GM10248 (cell line): ENCODE measurements at regions of chr3 and their contacts with region 1.

Region 1: GRCh38 chr3:27467545-27467944 is 16.6 kb downstream of the SLC4A7 start:
- DNase-seq: peak; percentile 63
- CTCF ChIP-seq: peak; percentile 50

Region 2: GRCh38 chr3:27312044-27312668 is 155.4 kb before region 1 on chr3:
- CTCF ChIA-PET with region 1: interaction called, 18 read pairs
- POLR2A ChIA-PET with region 1: no interaction called
- DNase-seq: peak; percentile 50
- CTCF ChIP-seq: peak; percentile 66

Region 3: DNA sequence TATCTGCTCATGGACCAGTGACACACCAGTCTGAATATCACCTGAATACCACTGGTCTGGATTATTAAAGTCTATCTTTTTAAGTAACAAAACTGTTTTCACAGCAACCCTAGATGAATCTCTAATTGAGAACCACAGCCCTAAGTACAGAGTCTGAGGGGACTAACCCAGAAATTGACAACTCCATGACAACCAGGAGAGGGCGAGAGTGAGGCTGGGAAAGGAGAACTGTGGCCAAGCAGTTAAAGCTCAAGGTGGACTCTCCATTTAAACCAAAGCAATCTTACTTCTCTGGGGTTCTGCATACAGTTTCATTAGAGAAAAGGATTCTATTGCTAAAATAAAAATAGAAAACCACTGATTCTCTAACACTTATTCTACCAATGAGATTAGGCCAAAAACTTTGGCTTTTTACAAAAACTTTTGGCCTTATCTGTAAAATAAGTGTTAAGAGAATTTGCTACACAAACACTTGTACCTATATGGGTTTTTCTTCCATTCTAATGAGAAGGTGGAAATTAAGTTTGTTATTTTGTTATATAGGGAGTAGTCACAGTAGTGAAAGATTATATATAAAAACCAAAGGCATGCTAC is 109.8 kb before region 1 on chr3:
- CTCF ChIA-PET with region 1: interaction called, 24 read pairs
- POLR2A ChIA-PET with region 1: no interaction called
- DNase-seq: peak; percentile 48
- CTCF ChIP-seq: peak; percentile 80

Region 4: GRCh38 chr3:27387625-27388024 is 79.9 kb before region 1 on chr3:
- CTCF ChIA-PET with region 1: no interaction called
- POLR2A ChIA-PET with region 1: no interaction called
- DNase-seq: no peak
- CTCF ChIP-seq: no peak

Region 5: GRCh38 chr3:27456554-27456953 is 11.0 kb before region 1 on chr3:
- CTCF ChIA-PET with region 1: interaction called, 30 read pairs
- POLR2A ChIA-PET with region 1: no interaction called
- DNase-seq: no peak
- CTCF ChIP-seq: no peak

Region 6: GRCh38 chr3:27479806-27480543 is 12.4 kb after region 1 on chr3:
- CTCF ChIA-PET with region 1: interaction called, 16 read pairs
- POLR2A ChIA-PET with region 1: interaction called, 4 read pairs
- DNase-seq: no peak
- CTCF ChIP-seq: no peak

Region 7: DNA sequence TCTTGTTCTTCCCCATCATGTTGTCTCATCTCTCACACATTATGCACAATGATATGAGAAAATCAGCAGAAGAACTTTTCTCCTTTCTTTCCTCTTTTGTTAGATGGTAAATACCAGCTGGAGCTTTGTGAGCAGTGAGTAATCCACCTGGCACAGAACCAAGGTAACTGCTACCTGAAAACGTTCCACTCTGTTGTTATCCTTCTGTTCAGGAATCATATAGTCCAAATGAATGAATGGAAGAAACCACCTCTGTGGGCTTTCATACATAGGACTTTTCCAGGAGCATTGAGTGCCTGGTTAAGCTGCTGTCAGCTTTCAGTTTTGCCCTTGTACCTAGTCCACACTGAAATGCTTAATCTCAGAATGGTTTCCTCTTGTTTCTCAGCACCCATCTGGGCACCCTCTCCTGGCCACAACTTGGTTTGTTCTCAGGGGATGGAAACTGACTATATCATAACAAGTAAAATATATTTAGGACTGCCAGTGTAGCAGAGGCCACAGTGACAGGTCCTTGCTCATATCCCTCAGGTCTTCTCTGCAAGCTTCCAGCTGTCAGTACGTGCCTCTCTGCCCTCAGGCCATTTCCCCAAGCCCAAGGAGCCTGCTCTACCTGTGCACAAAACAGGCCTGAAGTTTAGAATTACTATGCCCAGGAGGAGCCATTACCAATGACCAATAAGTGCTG is 40.1 kb after region 1 on chr3:
- CTCF ChIA-PET with region 1: no interaction called
- POLR2A ChIA-PET with region 1: no interaction called
- DNase-seq: no peak
- CTCF ChIP-seq: no peak

Region 8: GRCh38 chr3:27607370-27607769 is 139.8 kb after region 1 on chr3:
- CTCF ChIA-PET with region 1: no interaction called
- POLR2A ChIA-PET with region 1: no interaction called
- DNase-seq: no peak
- CTCF ChIP-seq: no peak